ENCODE measurements at regions of chr15 and their contacts with region 1.

Region 1: GRCh38 chr15:43370975-43371974 is at the starts of genes TUBGCP4 and ZSCAN29:
- DNase-seq: peak; percentile 82
- H3K4me3 Mint-ChIP-seq: peak within 1 kb of the TSS; percentile 87
- H3K27ac Mint-ChIP-seq: peak within 1 kb of the TSS; percentile 79
- H3K4me1 Mint-ChIP-seq: peaks cover 52% of the 10 kb centered on the region
- H3K27me3 Mint-ChIP-seq: no peaks in the 10 kb centered on the region
- total RNA-seq, gene TUBGCP4: 30.4 to 34.7 TPM
- total RNA-seq, gene ZSCAN29: 29.4 to 30.1 TPM

Region 2: DNA sequence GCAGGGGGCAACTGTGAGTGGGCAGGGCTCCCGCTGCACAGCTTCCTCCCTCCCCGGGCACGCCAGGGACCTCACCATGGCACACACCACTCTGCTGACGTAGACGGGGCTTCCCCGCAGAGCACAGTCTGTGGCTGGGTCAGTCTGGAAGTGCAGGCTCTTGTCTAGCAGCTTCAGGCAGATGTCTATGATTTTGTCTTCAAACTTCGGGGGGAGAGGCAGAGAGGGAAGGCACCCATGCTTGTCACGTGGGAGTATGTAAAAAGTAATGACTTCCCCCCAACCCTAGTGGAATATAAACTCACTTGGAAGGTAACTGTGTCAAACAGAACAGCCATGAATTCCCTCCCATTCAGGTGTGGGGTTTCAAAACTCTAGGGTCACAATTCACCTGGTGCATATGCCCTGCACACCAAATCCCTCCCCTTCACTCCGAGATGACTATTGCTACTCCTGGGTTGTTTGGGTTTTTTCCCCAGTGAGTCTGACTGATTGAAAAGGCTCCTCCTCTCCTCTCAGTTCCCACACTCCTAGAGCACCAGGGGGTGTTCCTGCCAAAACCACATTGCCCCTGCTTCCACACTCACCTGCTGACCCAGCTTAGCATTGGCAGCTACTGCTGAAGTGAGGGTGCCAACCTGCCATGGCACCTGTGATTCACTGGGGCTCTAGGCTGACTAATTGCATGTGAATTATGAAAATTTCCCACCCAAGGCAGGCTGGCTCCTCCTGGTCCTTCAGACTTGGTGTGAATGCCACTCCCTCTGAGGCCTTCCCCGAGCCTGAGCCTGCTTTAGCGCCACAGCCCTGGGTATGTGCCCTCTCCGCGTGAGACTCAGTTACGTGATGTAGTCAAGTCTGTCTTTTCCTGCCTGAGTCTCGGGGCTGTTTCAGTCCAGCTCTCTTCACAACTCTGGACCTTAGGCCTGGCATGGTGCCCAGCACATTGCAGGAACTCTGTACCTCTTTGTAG is 117.6 kb before region 1 on chr15:
- CTCF ChIA-PET with region 1: no interaction called
- POLR2A ChIA-PET with region 1: no interaction called
- DNase-seq: peak; percentile 31
- H3K4me3 Mint-ChIP-seq: no peak overlapping the region
- H3K27ac Mint-ChIP-seq: no peak overlapping the region
- H3K4me1 Mint-ChIP-seq: peaks cover 48% of the 10 kb centered on the region
- H3K27me3 Mint-ChIP-seq: peaks cover 7% of the 10 kb centered on the region

Region 3: GRCh38 chr15:43329960-43330779 is 41.1 kb before region 1 on chr15 and contains the start of gene LCMT2:
- CTCF ChIA-PET with region 1: interaction called, 4 read pairs
- POLR2A ChIA-PET with region 1: interaction called, 20 read pairs
- DNase-seq: peak; percentile 92
- H3K4me3 Mint-ChIP-seq: peak within 1 kb of the TSS; percentile 91
- H3K27ac Mint-ChIP-seq: peak within 1 kb of the TSS; percentile 99
- H3K4me1 Mint-ChIP-seq: peaks cover 44% of the 10 kb centered on the region
- H3K27me3 Mint-ChIP-seq: no peaks in the 10 kb centered on the region
- total RNA-seq, gene LCMT2: 8.9 to 9.5 TPM

Region 4: GRCh38 chr15:43463507-43463906 is 92.2 kb after region 1 on chr15:
- CTCF ChIA-PET with region 1: no interaction called
- POLR2A ChIA-PET with region 1: no interaction called
- DNase-seq: no peak
- H3K4me3 Mint-ChIP-seq: no peak overlapping the region
- H3K27ac Mint-ChIP-seq: no peak overlapping the region
- H3K4me1 Mint-ChIP-seq: no peaks in the 10 kb centered on the region
- H3K27me3 Mint-ChIP-seq: no peaks in the 10 kb centered on the region